ENCODE measurements at regions of chr7 and their contacts with region 1.

Region 1: GRCh38 chr7:143345428-143345900 is 17.0 kb downstream of the FAM131B start:
- DNase-seq: peak; percentile 82
- H3K4me3 ChIP-seq: peak overlapping the region; percentile 15 to 55 (median 27); a peak in 5 of 8 replicates
- H3K27ac ChIP-seq: no peak overlapping the region
- H3K4me1 ChIP-seq: peaks cover 0 to 6% (median 3%) of the 10 kb centered on the region in 4 experiments; a peak in 3 of 7 replicates
- H3K27me3 ChIP-seq: peaks cover 0 to 3% (median 0%) of the 10 kb centered on the region in 4 experiments; a peak in 2 of 7 replicates
- CTCF ChIP-seq: peak; percentile 56 to 68 (median 60)
- EP300 ChIP-seq: peak in 1 of 2 experiments; percentile 29; a peak in 1 of 3 replicates
- POLR2A ChIP-seq: no peak
- RAD21 ChIP-seq: peak; percentile 19 to 47; a peak in 3 of 4 replicates

Region 2: DNA sequence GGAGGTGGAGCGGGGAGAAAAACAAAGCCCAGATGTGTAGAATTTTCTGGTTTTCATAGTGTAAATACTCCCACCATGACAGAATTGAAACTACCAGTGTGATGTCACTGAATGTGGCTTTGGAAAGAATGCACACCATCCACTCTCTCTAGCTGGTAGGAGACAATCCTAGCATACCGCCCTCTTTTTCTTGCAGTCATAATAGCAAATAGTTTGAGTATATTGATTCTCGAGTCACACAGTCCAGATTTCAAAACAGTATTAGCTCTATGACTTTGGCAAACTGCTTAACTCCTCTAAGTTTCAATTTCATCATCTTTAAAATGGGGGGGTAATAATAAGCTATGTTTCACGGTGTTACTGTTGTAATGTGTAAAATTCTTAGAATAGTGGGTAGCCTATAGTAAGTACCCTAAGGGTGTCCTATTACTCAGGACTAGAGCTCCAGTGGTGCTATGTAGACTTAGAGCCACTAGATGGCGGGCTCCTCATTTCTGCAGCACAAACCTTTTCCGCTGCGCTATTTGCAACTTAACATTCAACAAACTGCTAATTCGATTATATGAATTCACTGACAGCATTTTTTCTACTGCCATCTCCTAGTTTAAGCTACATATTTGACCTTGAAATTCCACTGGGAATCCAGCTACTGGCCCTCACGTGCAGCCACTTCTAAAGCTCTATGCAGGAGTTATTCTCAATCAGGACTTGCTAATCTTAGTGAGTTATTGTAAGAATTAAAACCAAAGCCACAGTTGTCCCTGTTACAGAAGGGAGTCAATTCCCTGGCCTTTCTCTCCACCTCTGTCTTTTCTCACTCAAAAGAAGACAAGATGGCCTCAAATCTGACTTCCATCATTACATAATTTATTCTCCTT is 104.9 kb before region 1 on chr7:
- CTCF ChIA-PET with region 1: interaction called, 12 read pairs
- POLR2A ChIA-PET with region 1: no interaction called
- DNase-seq: peak in 1 of 2 experiments; percentile 58
- H3K4me3 ChIP-seq: no peak overlapping the region
- H3K27ac ChIP-seq: no peak overlapping the region
- H3K4me1 ChIP-seq: no peaks in the 10 kb centered on the region
- H3K27me3 ChIP-seq: no peaks in the 10 kb centered on the region; a peak in 1 of 7 replicates
- CTCF ChIP-seq: peak; percentile 15 to 85 (median 83)
- EP300 ChIP-seq: no peak
- POLR2A ChIP-seq: no peak
- RAD21 ChIP-seq: peak; percentile 87 to 92

Region 3: DNA sequence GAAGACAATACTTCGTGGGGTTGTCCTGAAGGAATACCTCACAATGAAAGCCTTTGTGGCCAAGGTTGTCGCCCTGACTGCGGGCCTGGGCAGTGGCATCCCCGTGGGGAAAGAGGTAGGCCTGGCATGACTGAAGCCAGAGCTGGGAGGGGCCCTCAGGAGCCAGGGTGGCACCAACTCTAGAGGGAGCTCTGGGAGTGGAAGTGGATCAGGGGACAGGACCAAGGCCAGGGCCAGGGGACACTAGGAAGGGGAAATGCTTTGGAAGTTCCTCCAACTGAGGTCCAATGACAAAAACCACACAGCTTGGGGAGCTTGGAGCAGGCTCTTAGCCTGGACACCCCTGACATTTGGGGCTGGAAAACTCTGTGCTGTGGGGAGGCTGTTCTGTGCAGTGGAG is 23.7 kb before region 1 on chr7:
- CTCF ChIA-PET with region 1: interaction called, 30 read pairs
- POLR2A ChIA-PET with region 1: interaction called, 3 read pairs
- DNase-seq: no peak
- H3K4me3 ChIP-seq: no peak overlapping the region
- H3K27ac ChIP-seq: no peak overlapping the region
- H3K4me1 ChIP-seq: peaks cover 0 to 5% (median 0%) of the 10 kb centered on the region in 4 experiments; a peak in 1 of 7 replicates
- H3K27me3 ChIP-seq: no peaks in the 10 kb centered on the region
- CTCF ChIP-seq: peak; percentile 25 to 41 (median 38)
- EP300 ChIP-seq: no peak
- POLR2A ChIP-seq: no peak
- RAD21 ChIP-seq: peak; percentile 43 to 64

Region 4: DNA sequence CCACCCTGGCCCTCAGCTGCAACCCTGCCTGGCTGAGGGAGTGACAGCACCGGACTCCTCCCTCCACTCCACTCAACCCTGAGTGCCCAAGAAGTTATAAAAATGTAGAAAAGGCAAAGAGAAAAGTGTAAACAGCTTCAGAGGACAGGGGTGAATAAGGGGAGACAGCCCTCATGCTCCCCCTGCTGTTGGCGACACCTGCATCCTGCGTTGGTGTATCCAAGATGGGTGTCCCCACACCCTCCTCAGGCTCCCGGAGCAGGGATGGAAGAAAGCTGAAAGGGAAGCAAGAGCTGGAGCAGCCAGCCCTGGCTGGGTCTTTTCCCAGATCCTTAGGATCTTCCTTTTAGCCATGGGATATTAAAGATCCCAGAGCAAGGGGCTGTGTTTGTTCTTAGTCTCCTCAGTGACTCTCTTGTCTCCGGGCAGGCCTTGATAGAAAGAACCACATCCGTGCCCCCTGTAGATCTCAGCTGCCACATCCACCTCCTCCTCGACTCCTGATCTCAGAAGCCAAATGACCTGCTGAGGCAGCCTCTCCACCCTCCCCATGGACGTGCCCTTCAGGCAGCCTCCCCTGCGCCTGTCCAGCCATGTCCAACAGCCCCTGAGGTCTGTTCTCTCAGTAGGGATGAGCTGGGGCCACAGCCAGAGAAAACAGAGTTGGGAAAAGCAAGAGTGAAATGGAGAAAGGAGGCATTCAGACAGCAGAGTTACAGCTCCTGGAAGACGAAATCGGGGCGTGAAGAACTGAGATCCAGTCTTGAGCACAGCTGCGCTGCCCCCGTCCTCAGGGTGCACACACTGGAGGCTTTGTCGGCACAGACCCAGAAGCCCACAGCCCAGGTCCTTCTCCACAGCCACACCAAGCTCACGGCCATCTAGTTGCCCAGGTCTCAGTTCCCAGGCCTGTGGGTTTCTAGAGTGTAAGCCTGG is 10.3 kb after region 1 on chr7:
- CTCF ChIA-PET with region 1: interaction called, 17 read pairs
- POLR2A ChIA-PET with region 1: interaction called, 8 read pairs
- DNase-seq: no peak
- H3K4me3 ChIP-seq: no peak overlapping the region
- H3K27ac ChIP-seq: no peak overlapping the region
- H3K4me1 ChIP-seq: peaks cover 0 to 8% (median 4%) of the 10 kb centered on the region in 4 experiments; a peak in 4 of 7 replicates
- H3K27me3 ChIP-seq: no peaks in the 10 kb centered on the region
- CTCF ChIP-seq: peak; percentile 24 to 54 (median 39); a peak in 3 of 4 replicates
- EP300 ChIP-seq: no peak
- POLR2A ChIP-seq: no peak
- RAD21 ChIP-seq: peak in 1 of 2 experiments; percentile 10; a peak in 1 of 4 replicates

Region 5: DNA sequence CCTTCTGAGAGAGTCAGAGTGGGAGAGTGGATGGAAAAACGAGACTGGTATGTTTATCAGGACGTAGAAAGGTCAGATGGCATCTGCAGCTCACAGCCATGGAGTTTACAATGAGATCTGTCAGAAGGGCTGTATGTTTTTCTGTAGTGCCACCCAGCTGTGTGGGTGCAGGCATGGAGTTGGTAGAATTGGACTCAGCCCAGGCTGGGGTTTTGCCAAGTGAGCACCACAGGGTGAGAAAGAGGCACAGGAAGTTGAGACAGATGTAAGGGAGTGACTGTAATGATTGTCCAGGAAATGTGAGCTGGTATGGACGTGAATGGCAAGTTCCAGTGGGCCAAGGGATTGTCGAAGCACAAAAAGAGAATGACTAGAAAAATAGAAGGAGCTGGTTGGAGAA is 26.6 kb after region 1 on chr7:
- CTCF ChIA-PET with region 1: interaction called, 25 read pairs
- POLR2A ChIA-PET with region 1: interaction called, 4 read pairs
- DNase-seq: no peak
- H3K4me3 ChIP-seq: no peak overlapping the region
- H3K27ac ChIP-seq: no peak overlapping the region
- H3K4me1 ChIP-seq: peaks cover 6 to 22% (median 13%) of the 10 kb centered on the region in 4 experiments; a peak in 5 of 7 replicates
- H3K27me3 ChIP-seq: no peaks in the 10 kb centered on the region
- CTCF ChIP-seq: peak in 1 of 3 experiments; percentile 21; a peak in 1 of 4 replicates
- EP300 ChIP-seq: no peak
- POLR2A ChIP-seq: no peak
- RAD21 ChIP-seq: peak; percentile 14 to 28; a peak in 1 of 4 replicates

Region 6: DNA sequence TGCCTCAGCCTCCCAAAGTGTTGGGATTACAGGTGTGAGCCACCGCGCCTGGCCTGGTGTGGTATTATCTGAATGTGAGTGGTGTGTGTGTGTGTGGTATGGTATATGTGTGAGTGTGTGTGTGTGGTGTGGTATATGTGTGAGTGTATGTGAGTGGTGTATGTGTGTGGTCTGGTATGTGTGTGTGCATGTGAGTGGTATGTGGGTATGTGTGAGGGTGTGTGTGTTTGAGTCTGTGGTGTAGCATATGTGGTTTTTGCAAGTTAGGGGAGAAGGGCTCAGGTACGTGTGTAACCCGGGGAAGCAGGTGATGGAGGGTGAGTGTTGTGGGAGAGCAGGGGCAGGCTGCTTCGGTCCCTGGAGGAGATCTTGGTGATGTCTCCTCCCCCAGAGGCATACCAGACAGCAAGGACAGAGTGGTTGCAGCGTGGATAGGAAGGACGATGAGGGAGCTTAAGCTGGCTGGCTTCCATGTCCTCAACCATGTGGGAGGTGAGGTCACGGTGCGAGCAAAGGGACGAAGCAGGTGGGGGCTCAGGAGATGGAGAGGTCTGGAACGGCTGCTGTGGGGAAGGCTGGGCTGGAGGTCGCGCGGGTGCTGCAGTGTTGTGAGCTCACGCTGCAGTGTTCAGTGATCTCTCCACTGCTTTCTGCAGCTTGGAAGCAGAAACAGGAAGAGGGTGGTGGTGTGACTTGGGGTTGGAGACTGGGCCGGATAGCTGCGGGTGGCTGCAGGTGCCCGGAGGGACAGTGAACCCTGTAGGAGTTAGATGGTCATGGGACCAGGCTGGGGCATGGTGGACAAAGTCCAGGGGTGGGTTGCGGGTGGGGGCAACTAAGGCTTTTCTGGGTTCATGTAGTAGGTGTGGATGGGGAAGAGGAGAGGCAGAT is 40.7 kb after region 1 on chr7:
- CTCF ChIA-PET with region 1: interaction called, 10 read pairs
- POLR2A ChIA-PET with region 1: interaction called, 28 read pairs
- DNase-seq: no peak
- H3K4me3 ChIP-seq: no peak overlapping the region
- H3K27ac ChIP-seq: peak overlapping the region; percentile 22; the same call in 1 of the 2 replicates
- H3K4me1 ChIP-seq: peaks cover 2 to 18% (median 4%) of the 10 kb centered on the region in 4 experiments; a peak in 6 of 7 replicates
- H3K27me3 ChIP-seq: no peaks in the 10 kb centered on the region
- CTCF ChIP-seq: no peak
- EP300 ChIP-seq: no peak
- POLR2A ChIP-seq: no peak; a peak in 1 of 3 replicates
- RAD21 ChIP-seq: no peak

Measured in H1 (cell line).